PC-3 (cell line): ENCODE measurements at regions of chr5 and their contacts with region 1.

Region 1: DNA sequence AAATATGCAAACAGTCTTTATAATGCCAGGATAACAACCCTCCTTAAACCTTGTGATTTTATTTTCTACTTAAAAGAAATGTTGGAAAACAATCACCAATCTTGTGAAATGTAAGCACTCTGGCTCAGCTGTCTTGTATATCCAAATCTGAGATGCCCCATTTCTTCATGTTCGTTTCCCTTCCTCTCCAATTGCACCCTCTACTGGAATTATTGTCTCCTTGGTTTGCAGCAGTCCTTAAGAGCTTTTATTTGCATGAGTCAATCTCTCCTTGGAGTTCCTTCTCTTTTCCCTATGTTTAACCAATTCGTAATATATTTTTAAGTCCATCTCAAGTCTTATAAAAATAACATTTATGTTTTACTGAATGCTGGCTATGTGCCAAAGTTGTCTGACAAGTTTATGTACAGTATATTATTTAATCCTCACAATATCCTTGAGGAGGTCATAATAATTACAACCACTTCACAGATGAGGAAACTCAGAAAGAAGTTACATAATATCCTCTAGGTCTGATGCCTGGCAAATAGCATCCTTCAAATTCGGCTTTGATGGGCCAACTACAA is 362.0 kb upstream of the CDH10 start:
- DNase-seq: peak; percentile 84
- ATAC-seq: peak; percentile 73
- H3K4me3 ChIP-seq: no peak overlapping the region
- H3K27ac ChIP-seq: no peak overlapping the region
- H3K4me1 ChIP-seq: peaks cover 13% of the 10 kb centered on the region
- H3K27me3 ChIP-seq: no peaks in the 10 kb centered on the region
- CTCF ChIP-seq: peak; percentile 77

Region 2: DNA sequence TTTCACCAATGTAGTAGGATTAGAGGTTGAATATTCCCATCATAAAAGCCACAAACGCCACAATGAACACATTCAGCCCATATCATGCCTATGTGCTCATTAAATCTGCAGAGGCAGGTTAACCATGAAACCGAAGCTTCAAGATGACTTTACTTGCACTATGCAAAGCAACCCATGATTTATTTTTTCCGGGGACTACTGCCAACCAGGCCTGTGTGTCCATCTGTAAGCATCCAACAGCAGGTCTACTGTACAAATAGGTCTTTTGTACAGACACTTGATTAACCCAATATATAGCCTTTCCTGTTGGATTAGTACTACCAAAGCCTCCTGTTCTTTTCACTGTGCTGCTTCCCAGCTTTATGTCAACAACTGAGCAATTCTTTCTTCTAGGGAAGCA is 257.1 kb before region 1 on chr5:
- CTCF ChIA-PET with region 1: interaction called, 4 read pairs
- POLR2A ChIA-PET with region 1: no interaction called
- intact Hi-C with region 1: loop called (anchors 2 kb)
- DNase-seq: no peak
- ATAC-seq: no peak
- H3K4me3 ChIP-seq: no peak overlapping the region
- H3K27ac ChIP-seq: no peak overlapping the region
- H3K4me1 ChIP-seq: no peaks in the 10 kb centered on the region
- H3K27me3 ChIP-seq: no peaks in the 10 kb centered on the region
- CTCF ChIP-seq: no peak

Region 3: GRCh38 chr5:25056836-25057235 is 50.0 kb after region 1 on chr5:
- CTCF ChIA-PET with region 1: no interaction called
- POLR2A ChIA-PET with region 1: no interaction called
- intact Hi-C with region 1: loop called (anchors 2 kb)
- DNase-seq: peak; percentile 58
- ATAC-seq: peak; percentile 99
- H3K4me3 ChIP-seq: no peak overlapping the region
- H3K27ac ChIP-seq: no peak overlapping the region
- H3K4me1 ChIP-seq: peaks cover 12% of the 10 kb centered on the region; the same call in 1 of the 2 replicates
- H3K27me3 ChIP-seq: no peaks in the 10 kb centered on the region
- CTCF ChIP-seq: no peak